ENCODE measurements at regions of chr2 and their contacts with region 1.

Region 1: GRCh38 chr2:158006961-158007719 is 94.5 kb upstream of the UPP2 start:
- DNase-seq: no peak
- ATAC-seq: peak; percentile 56; the same call in 1 of the 2 replicates
- H3K4me3 ChIP-seq: no peak overlapping the region
- H3K27ac ChIP-seq: no peak overlapping the region
- H3K4me1 ChIP-seq: peaks cover 0 to 12% of the 10 kb centered on the region in 2 experiments; a peak in 2 of 4 replicates
- H3K27me3 ChIP-seq: no peaks in the 10 kb centered on the region
- CTCF ChIP-seq: peak in 2 of 3 experiments; percentile 13 to 15; a peak in 1 of 6 replicates
- POLR2A ChIP-seq: no peak
- RAD21 ChIP-seq: no peak

Region 2: DNA sequence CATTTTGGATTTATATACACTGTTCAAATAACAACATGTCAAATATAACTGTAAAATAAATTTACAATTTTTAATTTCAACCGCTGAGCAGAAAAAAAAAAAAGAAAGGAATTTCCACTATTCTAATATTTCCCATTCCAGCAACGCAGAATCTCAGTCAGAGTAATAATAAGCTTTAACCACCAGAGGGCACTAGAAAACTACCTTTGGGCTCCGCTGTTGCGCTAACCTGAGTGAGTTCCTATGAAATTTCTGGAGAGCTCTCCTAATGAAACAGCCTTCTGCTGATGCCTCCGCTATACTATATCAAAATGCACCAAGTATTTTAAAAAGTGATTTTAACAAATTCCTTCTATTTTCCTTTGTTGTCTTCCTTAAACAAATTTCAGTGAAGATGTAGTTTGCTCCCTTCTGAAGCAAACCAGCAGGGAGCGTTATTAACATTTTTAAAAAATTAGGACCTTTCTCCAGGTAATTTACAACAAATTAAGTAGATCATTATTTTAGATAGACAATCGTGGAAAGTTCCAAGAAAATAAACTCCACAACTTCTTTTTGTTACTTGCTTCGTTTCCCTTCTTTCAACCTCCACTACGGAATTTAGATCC is 704.5 kb before region 1 on chr2:
- CTCF ChIA-PET with region 1: no interaction called
- POLR2A ChIA-PET with region 1: no interaction called
- RAD21 ChIA-PET with region 1: interaction called in 1 of 2 experiments, 4 read pairs
- intact Hi-C with region 1: loop called (anchors 1 kb)
- DNase-seq: peak; percentile 13
- ATAC-seq: peak; percentile 88
- H3K4me3 ChIP-seq: no peak overlapping the region
- H3K27ac ChIP-seq: no peak overlapping the region
- H3K4me1 ChIP-seq: 0 out of 4 replicates have a peak, but pooled peaks cover 0 to 5% of the 10 kb centered on the region in 2 experiments
- H3K27me3 ChIP-seq: no peaks in the 10 kb centered on the region
- CTCF ChIP-seq: peak; percentile 56 to 80 (median 78)
- POLR2A ChIP-seq: no peak
- RAD21 ChIP-seq: peak; percentile 83

Region 3: GRCh38 chr2:157327621-157328500 is 679.3 kb before region 1 on chr2:
- CTCF ChIA-PET with region 1: interaction called, 6 read pairs
- POLR2A ChIA-PET with region 1: no interaction called
- RAD21 ChIA-PET with region 1: no interaction called
- intact Hi-C with region 1: loop called (anchors 1 kb)
- DNase-seq: peak; percentile 65
- ATAC-seq: peak; percentile 100
- H3K4me3 ChIP-seq: no peak overlapping the region
- H3K27ac ChIP-seq: no peak overlapping the region
- H3K4me1 ChIP-seq: no peaks in the 10 kb centered on the region
- H3K27me3 ChIP-seq: no peaks in the 10 kb centered on the region
- CTCF ChIP-seq: peak; percentile 50 to 97 (median 92); a peak in 5 of 6 replicates
- POLR2A ChIP-seq: no peak
- RAD21 ChIP-seq: peak; percentile 71

Region 4: DNA sequence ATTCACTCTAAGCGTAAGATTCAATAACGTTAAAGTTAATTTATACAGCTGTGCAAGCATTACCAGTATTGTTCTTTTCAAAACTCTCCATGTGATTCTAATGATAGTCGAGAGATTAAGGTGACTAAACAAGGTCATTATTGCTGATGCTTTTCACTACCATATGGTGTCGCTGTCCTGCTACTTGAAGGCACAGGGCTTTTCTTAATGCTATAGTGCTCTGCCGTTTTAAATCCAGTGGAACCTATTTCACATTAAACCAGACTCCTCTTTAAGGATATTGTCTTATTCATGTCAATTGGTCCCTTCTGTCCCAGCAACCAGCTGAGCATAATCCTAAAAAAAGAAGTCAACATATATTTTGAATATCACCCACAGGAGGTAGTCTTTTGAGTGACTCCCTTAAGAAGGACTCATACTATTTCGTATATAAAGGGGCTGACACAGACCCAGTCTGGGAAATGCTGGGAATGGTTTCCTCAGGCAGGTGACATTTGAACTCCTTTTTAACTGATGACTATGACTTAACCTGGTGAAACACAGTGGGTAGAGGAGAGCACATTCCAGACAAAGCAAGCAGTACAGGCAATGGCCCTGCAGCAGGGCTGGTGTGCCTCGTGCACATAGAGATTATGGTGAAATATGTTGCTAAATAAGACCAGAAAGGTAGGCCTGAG is 509.4 kb before region 1 on chr2:
- CTCF ChIA-PET with region 1: interaction called, 6 read pairs
- POLR2A ChIA-PET with region 1: no interaction called
- RAD21 ChIA-PET with region 1: no interaction called
- intact Hi-C with region 1: loop called (anchors 1 kb)
- DNase-seq: peak; percentile 13
- ATAC-seq: peak; percentile 97
- H3K4me3 ChIP-seq: no peak overlapping the region
- H3K27ac ChIP-seq: no peak overlapping the region
- H3K4me1 ChIP-seq: no peaks in the 10 kb centered on the region
- H3K27me3 ChIP-seq: no peaks in the 10 kb centered on the region
- CTCF ChIP-seq: peak; percentile 75 to 86 (median 76)
- POLR2A ChIP-seq: no peak
- RAD21 ChIP-seq: peak; percentile 83

Region 5: GRCh38 chr2:157572725-157573124 is 434.4 kb before region 1 on chr2:
- CTCF ChIA-PET with region 1: interaction called, 5 read pairs
- POLR2A ChIA-PET with region 1: no interaction called
- RAD21 ChIA-PET with region 1: no interaction called
- intact Hi-C with region 1: loop called (anchors 2 kb)
- DNase-seq: peak; percentile 13
- ATAC-seq: peak; percentile 87
- H3K4me3 ChIP-seq: no peak overlapping the region
- H3K27ac ChIP-seq: no peak overlapping the region
- H3K4me1 ChIP-seq: no peaks in the 10 kb centered on the region
- H3K27me3 ChIP-seq: no peaks in the 10 kb centered on the region
- CTCF ChIP-seq: peak; percentile 19 to 60 (median 59); a peak in 5 of 6 replicates
- POLR2A ChIP-seq: no peak
- RAD21 ChIP-seq: peak; percentile 45

Region 6: GRCh38 chr2:157777427-157777826 is 229.7 kb before region 1 on chr2:
- CTCF ChIA-PET with region 1: interaction called, 7 read pairs
- POLR2A ChIA-PET with region 1: no interaction called
- RAD21 ChIA-PET with region 1: interaction called in 1 of 2 experiments, 3 read pairs
- intact Hi-C with region 1: loop called (anchors 1 kb)
- DNase-seq: peak; percentile 28
- ATAC-seq: 0 out of 2 replicates have a peak, but pooled peaks have one; percentile 40
- H3K4me3 ChIP-seq: no peak overlapping the region
- H3K27ac ChIP-seq: no peak overlapping the region
- H3K4me1 ChIP-seq: no peaks in the 10 kb centered on the region
- H3K27me3 ChIP-seq: no peaks in the 10 kb centered on the region
- CTCF ChIP-seq: peak; percentile 60 to 79 (median 72); a peak in 5 of 6 replicates
- POLR2A ChIP-seq: no peak
- RAD21 ChIP-seq: peak; percentile 85

Region 7: GRCh38 chr2:158024288-158024898 is 17.3 kb after region 1 on chr2:
- CTCF ChIA-PET with region 1: interaction called, 12 read pairs
- POLR2A ChIA-PET with region 1: no interaction called
- RAD21 ChIA-PET with region 1: no interaction called
- intact Hi-C with region 1: no loop called
- DNase-seq: no peak
- ATAC-seq: peak; percentile 84
- H3K4me3 ChIP-seq: no peak overlapping the region
- H3K27ac ChIP-seq: no peak overlapping the region
- H3K4me1 ChIP-seq: no peaks in the 10 kb centered on the region
- H3K27me3 ChIP-seq: no peaks in the 10 kb centered on the region
- CTCF ChIP-seq: peak; percentile 75 to 91 (median 75)
- POLR2A ChIP-seq: no peak
- RAD21 ChIP-seq: peak; percentile 79

Region 8: GRCh38 chr2:158179660-158180059 is 172.5 kb after region 1 on chr2:
- CTCF ChIA-PET with region 1: no interaction called
- POLR2A ChIA-PET with region 1: no interaction called
- RAD21 ChIA-PET with region 1: no interaction called
- intact Hi-C with region 1: no loop called
- DNase-seq: peak; percentile 13
- ATAC-seq: peak; percentile 55
- H3K4me3 ChIP-seq: no peak overlapping the region
- H3K27ac ChIP-seq: no peak overlapping the region
- H3K4me1 ChIP-seq: no peaks in the 10 kb centered on the region
- H3K27me3 ChIP-seq: no peaks in the 10 kb centered on the region
- CTCF ChIP-seq: peak; percentile 18 to 44 (median 44); a peak in 3 of 6 replicates
- POLR2A ChIP-seq: no peak
- RAD21 ChIP-seq: peak; percentile 75

Measured in HCT116 (cell line).